HAP-1 (cell line): ENCODE measurements at regions of chr1 and their contacts with region 1.

Region 1: GRCh38 chr1:214328770-214329469 is 48.0 kb downstream of the SMYD2 start:
- DNase-seq: peak; percentile 56 to 82
- H3K4me3 ChIP-seq: no peak overlapping the region
- H3K4me1 ChIP-seq: no peaks in the 10 kb centered on the region
- H3K27me3 ChIP-seq: no peaks in the 10 kb centered on the region

Region 2: GRCh38 chr1:214205053-214205452 is 123.9 kb before region 1 on chr1:
- in situ Hi-C with region 1: loop called (anchors 5 kb)
- DNase-seq: no peak
- H3K4me3 ChIP-seq: no peak overlapping the region
- H3K4me1 ChIP-seq: no peaks in the 10 kb centered on the region
- H3K27me3 ChIP-seq: peaks cover 6% of the 10 kb centered on the region

Region 3: DNA sequence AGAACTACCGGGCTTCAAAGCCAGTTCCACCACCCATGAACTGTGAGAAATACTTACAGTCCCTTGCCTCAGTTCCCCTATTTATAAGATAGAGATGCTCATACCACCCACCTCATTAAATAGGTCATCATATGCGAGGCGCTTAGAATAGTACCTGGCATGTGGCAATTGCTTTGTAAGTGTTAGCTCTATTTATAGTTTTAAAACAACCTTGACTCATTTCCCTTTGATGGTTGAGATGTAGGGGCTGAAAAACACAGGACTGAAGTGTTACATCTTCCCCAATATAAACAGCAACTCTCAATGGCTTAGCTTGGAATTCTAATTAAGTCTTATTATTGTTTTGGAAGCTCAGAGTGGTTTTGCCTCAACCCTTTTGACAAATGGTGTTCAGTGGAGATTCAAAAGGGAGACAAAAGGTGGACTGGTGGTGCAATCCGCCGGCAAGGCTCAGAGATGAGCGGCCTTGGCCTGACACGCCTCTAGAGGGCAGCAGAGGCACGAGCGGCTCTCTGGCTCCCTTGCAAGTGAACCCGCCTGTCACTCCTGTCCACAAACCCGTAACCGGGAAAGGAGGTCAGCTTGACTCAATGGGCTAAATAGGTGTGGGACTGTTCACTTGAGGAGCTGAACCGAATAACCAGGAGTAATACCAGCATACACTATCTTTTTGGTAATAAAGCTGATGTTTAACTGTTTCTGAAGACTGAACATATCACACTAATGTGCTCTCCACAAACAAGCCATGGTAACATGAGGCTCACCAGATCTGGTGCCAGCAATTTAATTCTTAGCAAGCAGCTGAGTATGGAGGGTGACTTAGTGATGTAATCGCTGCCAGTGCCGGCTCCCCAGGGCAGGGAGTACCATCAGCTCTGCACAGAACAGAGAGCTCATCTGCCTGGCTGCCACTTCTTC is 67.5 kb before region 1 on chr1:
- in situ Hi-C with region 1: loop called (anchors 5 kb)
- DNase-seq: peak; percentile 68 to 91
- H3K4me3 ChIP-seq: no peak overlapping the region
- H3K4me1 ChIP-seq: peaks cover 6% of the 10 kb centered on the region; the same call in 1 of the 2 replicates
- H3K27me3 ChIP-seq: peaks cover 24% of the 10 kb centered on the region

Region 4: DNA sequence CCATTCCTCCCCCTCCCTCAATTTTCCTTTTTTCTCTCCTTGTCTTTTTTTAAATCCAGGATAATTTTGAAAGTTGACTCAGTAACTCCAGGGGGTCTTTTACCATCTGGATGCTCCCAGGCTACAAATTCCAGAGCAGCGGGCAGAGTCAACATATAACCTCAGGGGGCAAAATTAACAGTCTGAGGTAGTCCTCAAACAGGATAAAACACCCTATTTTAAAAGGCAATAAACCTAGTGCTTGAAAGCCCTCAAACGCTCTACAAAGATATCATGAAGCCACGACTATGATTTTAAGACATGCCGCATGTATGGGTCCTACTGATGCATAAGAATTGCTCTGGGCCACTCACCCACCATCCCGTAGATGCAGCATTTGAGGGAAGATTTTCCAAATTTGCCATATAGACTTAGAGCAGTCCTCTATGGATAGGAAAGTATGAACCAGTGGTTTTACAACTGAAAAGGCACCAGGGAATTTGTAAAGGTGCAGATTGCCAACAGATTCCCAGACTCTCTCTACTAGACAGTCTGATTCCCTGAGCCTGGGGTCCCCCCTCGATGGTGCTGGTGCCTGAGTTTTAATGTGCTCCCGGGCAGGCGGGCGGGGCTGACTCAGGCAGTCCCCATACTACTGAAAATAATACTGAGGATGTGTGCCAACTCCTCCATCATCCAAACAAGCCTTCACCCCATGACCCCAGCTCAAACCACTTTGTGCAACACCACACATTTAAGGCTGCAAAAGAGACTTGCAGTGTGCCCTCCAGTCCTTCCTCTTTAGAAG is 185.3 kb after region 1 on chr1:
- in situ Hi-C with region 1: no loop called
- DNase-seq: no peak
- H3K4me3 ChIP-seq: no peak overlapping the region
- H3K4me1 ChIP-seq: no peaks in the 10 kb centered on the region
- H3K27me3 ChIP-seq: no peaks in the 10 kb centered on the region

Region 5: GRCh38 chr1:214584805-214585766 is 256.2 kb after region 1 on chr1:
- in situ Hi-C with region 1: loop called (anchors 10 kb)
- DNase-seq: peak in 1 of 2 experiments; percentile 54
- H3K4me3 ChIP-seq: no peak overlapping the region
- H3K4me1 ChIP-seq: no peaks in the 10 kb centered on the region
- H3K27me3 ChIP-seq: no peaks in the 10 kb centered on the region; the same call in 1 of the 2 replicates

Region 6: GRCh38 chr1:215526553-215527151 is 1197.7 kb after region 1 on chr1:
- in situ Hi-C with region 1: loop called (anchors 25 kb)
- DNase-seq: peak in 1 of 2 experiments; percentile 59
- H3K4me3 ChIP-seq: no peak overlapping the region
- H3K4me1 ChIP-seq: no peaks in the 10 kb centered on the region
- H3K27me3 ChIP-seq: no peaks in the 10 kb centered on the region